Psoas muscle (tissue), 8 donors: ENCODE measurements at regions of chr13 and their contacts with region 1.

Region 1: GRCh38 chr13:26335158-26335557 is 81.2 kb downstream of the CDK8 start:
- DNase-seq: no peak
- ATAC-seq: no peak
- H3K4me3 ChIP-seq: no peak overlapping the region
- H3K27ac ChIP-seq: no peak overlapping the region
- H3K4me1 ChIP-seq: peaks cover 12% of the 10 kb centered on the region
- H3K27me3 ChIP-seq: no peaks in the 10 kb centered on the region
- CTCF ChIP-seq: no peak

Region 2: DNA sequence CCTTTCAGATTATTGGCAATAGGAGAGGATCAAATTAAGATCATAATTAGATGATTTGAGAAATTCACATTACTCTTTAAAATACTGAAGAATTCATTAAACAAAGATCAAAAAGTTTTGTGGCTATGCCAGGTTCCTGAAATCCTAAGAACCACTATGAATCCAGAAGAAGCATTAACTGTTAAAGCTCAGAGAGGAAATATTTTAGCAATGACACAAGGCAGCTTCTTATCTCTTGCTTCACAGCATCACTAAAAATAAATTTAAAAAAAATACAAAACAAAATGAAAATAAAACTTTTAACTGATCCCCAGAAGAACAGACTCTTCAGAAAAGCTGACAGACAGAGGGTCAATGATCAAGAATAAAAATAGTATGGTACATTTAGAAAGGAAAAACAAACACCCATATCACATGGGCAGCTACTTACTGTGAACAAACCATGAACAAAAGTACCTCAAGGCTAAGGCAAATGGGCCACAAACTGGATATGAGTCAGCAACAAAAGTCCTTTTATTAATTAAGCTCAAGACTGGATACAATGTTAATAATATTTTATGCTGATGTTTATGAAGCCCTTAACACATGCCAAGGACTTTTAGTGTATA is 132.7 kb before region 1 on chr13:
- intact Hi-C with region 1: no loop called
- DNase-seq: no peak
- ATAC-seq: peak in 1 of 4 donors; percentile 47
- H3K4me3 ChIP-seq: no peak overlapping the region
- H3K27ac ChIP-seq: peak overlapping the region; percentile 39
- H3K4me1 ChIP-seq: peaks cover 12% of the 10 kb centered on the region
- H3K27me3 ChIP-seq: no peaks in the 10 kb centered on the region
- CTCF ChIP-seq: no peak

Region 3: GRCh38 chr13:26382366-26382765 is 47.2 kb after region 1 on chr13:
- intact Hi-C with region 1: loop called in 1 of 2 experiments (anchors 5 kb)
- DNase-seq: no peak
- ATAC-seq: no peak
- H3K4me3 ChIP-seq: no peak overlapping the region
- H3K27ac ChIP-seq: no peak overlapping the region
- H3K4me1 ChIP-seq: no peaks in the 10 kb centered on the region
- H3K27me3 ChIP-seq: no peaks in the 10 kb centered on the region
- CTCF ChIP-seq: no peak